OCI-LY7 (cell line): ENCODE measurements at regions of chr4 and their contacts with region 1.

Region 1: DNA sequence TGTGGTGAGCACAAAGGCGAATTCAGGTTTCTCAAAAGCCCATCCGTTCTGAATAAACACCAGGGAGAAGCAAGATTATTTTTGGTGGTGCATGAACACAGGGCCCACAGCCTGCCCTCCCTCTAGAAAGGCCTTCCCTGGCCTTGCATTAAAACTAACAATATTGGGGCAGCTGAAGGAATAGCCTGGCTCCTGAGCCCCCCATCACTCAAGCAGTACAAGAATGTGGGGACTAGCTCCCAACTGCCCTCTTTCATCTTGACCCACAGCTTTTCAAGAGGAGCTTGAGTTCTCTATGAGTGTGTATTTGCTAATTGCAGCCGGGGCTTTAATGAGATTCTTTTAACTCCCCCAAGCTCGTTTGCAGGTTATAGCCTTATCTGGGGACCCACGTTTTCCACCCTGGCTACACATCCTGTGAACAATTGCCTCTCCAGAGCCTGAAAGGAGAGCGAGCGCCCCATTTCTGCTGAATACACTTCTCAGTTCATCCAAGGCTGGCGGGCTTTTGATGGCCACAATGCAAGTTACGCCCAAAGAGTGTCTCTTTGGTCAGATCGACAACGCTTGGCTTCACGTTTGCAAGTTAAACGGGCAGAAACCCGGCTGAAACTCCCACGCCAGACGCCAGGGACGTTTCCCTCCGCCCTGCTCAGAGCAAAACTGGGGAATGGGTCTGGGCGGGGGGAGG is 4.7 kb upstream of the GSX2 start:
- DNase-seq: no peak
- H3K4me3 ChIP-seq: no peak overlapping the region
- H3K27ac ChIP-seq: no peak overlapping the region
- H3K4me1 ChIP-seq: peaks cover 43% of the 10 kb centered on the region
- CTCF ChIP-seq: no peak

Region 2: GRCh38 chr4:54107951-54108873 is 13.0 kb after region 1 on chr4:
- CTCF ChIA-PET with region 1: no interaction called
- POLR2A ChIA-PET with region 1: interaction called, 12 read pairs
- intact Hi-C with region 1: no loop called
- DNase-seq: no peak
- H3K4me3 ChIP-seq: peak overlapping the region; percentile 46
- H3K27ac ChIP-seq: no peak overlapping the region
- H3K4me1 ChIP-seq: peaks cover 26% of the 10 kb centered on the region
- CTCF ChIP-seq: no peak

Region 3: GRCh38 chr4:54308110-54308509 is 212.9 kb after region 1 on chr4:
- CTCF ChIA-PET with region 1: no interaction called
- POLR2A ChIA-PET with region 1: no interaction called
- intact Hi-C with region 1: no loop called
- DNase-seq: no peak
- H3K4me3 ChIP-seq: no peak overlapping the region
- H3K27ac ChIP-seq: no peak overlapping the region
- H3K4me1 ChIP-seq: no peaks in the 10 kb centered on the region
- CTCF ChIP-seq: no peak